GM12878 (cell line): ENCODE measurements at regions of chr4 and their contacts with region 1.

Region 1: GRCh38 chr4:137722910-137723309 is 190.6 kb upstream of the PCDH18 start:
- DNase-seq: no peak
- ATAC-seq: no peak
- H3K4me3 ChIP-seq: no peak overlapping the region
- H3K27ac ChIP-seq: no peak overlapping the region
- H3K4me1 ChIP-seq: no peaks in the 10 kb centered on the region
- H3K27me3 ChIP-seq: no peaks in the 10 kb centered on the region
- CTCF ChIP-seq: no peak
- EP300 ChIP-seq: no peak
- POLR2A ChIP-seq: no peak
- RAD21 ChIP-seq: no peak

Region 2: DNA sequence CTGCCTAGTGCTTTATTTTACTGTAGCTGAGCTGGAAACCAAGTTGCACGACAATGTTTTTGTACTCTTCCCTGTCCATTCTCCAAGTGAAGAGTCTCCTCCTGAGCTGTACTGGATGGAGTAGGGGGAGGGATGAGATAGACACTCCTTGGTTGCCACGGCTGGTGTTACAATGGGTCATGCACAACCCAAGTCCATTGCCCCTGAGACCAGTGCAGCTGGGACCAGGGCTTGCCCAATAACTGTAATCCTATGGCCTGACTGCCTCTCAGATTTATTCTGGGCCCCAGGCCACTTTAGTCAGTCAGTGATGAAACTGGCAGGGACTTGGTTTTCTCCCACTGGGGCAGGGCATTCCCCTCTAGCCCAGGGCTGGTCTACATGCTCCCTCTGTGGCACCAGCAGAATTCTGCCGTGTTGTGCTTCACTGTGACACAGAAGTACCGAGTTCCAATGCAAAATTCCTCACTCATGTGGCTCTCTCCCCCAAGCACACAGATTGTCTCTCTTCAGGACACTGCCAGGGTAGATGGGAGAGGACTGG is 12.7 kb after region 1 on chr4:
- CTCF ChIA-PET with region 1: interaction called, 11 read pairs
- POLR2A ChIA-PET with region 1: no interaction called
- RAD21 ChIA-PET with region 1: no interaction called
- SMC1A ChIA-PET with region 1: no interaction called
- in situ Hi-C with region 1: no loop called
- intact Hi-C with region 1: no loop called
- DNase-seq: no peak
- ATAC-seq: peak; percentile 75
- H3K4me3 ChIP-seq: no peak overlapping the region
- H3K27ac ChIP-seq: no peak overlapping the region
- H3K4me1 ChIP-seq: no peaks in the 10 kb centered on the region
- H3K27me3 ChIP-seq: no peaks in the 10 kb centered on the region
- CTCF ChIP-seq: peak in 1 of 3 experiments; percentile 23; a peak in 1 of 6 replicates
- EP300 ChIP-seq: no peak
- POLR2A ChIP-seq: no peak
- RAD21 ChIP-seq: no peak